Thyroid gland (tissue), 4 donors: ENCODE measurements at regions of chr22 and their contacts with region 1.

Region 1: GRCh38 chr22:19970479-19971275 is 29.1 kb upstream of the TXNRD2 start:
- DNase-seq: peak; percentile 61 to 64
- H3K4me3 ChIP-seq: no peak overlapping the region
- H3K27ac ChIP-seq: peak overlapping the region in 1 of 3 donors; percentile 65
- H3K4me1 ChIP-seq: peaks cover 0 to 20% of the 10 kb centered on the region in 2 donors
- H3K27me3 ChIP-seq: no peaks in the 10 kb centered on the region
- CTCF ChIP-seq: peak; percentile 72 to 97 (median 90)
- POLR2A ChIP-seq: no peak

Region 2: DNA sequence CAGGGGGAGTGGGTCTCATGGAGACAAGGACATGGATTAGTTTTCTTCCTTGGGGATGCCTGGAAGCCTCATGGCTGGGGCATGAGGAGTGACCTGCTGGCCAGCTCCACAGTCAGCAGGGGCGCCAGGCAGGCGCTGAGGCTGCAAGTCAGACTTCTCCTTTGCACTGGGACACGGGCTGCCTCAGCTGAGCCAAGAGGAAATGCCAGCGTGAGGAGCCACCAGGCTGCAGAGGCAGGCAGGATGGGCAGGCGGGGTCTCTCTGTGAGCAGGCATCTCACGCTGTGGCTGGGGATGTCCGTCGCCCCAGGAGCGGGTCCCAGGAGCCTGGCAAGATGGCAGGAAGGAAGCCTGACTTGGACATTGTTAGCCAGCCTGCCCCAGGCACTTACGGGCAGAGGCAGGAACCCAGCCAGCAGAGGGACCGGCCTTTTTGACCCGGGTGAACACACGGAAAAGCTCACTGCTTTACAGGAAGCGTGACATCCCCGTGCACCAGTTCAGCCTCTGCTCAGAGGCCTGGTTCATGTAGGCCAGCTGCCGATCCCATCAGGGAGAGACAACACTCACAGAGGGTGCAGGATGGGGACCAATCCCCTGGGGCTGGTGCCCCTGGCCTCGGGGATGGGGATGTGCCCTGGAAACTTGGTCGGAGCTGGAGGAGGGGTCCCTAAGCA is 126.2 kb before region 1 on chr22:
- intact Hi-C with region 1: no loop called
- DNase-seq: peak; percentile 32 to 35
- H3K4me3 ChIP-seq: no peak overlapping the region
- H3K27ac ChIP-seq: peak overlapping the region in 2 of 3 donors; percentile 30 to 60
- H3K4me1 ChIP-seq: peaks cover 28 to 52% of the 10 kb centered on the region in 2 donors
- H3K27me3 ChIP-seq: no peaks in the 10 kb centered on the region
- CTCF ChIP-seq: no peak
- POLR2A ChIP-seq: no peak

Region 3: GRCh38 chr22:20013382-20013871 is 42.8 kb after region 1 on chr22:
- intact Hi-C with region 1: loop called (anchors 2 kb)
- DNase-seq: peak; percentile 67 to 75
- H3K4me3 ChIP-seq: no peak overlapping the region
- H3K27ac ChIP-seq: peak overlapping the region; percentile 17 to 71 (median 44)
- H3K4me1 ChIP-seq: peaks cover 17 to 37% of the 10 kb centered on the region in 2 donors
- H3K27me3 ChIP-seq: no peaks in the 10 kb centered on the region
- CTCF ChIP-seq: peak; percentile 45 to 95 (median 82)
- POLR2A ChIP-seq: no peak

Region 4: GRCh38 chr22:20102203-20102780 is 131.6 kb after region 1 on chr22:
- intact Hi-C with region 1: no loop called
- DNase-seq: no peak
- H3K4me3 ChIP-seq: no peak overlapping the region
- H3K27ac ChIP-seq: no peak overlapping the region
- H3K4me1 ChIP-seq: peaks cover 11 to 14% of the 10 kb centered on the region in 2 donors
- H3K27me3 ChIP-seq: no peaks in the 10 kb centered on the region
- CTCF ChIP-seq: no peak
- POLR2A ChIP-seq: no peak

Region 5: DNA sequence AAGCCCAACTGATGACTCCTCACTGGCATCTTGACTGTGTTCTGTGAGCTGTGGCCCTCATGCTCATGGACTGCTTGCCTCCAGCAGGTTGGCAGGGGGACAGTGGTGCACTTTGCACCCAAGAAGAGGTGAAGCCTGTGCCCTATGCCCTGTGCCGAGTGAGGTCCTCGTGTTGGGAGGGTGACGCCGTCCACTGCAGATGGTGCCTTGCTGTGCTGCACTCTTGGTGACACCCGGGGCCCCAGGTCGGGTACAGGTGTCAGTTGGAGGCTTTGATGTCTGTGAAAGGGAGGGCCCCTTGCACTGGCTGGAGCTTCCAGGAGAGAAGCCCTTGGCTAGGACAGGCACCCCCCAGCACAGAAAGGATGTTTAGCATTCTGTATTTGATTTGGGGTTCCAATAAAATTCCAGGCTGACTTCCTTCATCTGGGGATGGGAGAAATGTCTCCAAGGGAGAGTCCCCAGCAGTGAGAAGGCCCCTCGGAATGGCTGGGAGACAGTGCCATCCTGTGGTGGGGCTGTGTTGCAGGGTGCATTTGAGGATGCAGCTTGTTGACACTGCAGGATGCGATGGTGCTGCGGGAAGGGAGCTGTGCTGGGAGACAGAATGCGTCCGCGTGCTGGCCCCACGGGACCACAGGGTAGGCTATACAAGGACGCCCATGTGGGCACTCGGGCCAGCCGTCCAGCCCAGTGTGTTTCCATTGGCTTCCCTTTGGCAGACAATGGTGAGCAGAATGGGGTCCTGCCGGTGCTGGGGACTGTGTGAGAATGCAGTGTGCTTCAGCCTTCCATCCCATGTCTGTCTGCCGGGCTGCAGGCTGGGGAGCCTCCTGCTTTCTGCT is 158.4 kb after region 1 on chr22:
- intact Hi-C with region 1: loop called (anchors 10 kb)
- DNase-seq: peak in 1 of 2 donors; percentile 27
- H3K4me3 ChIP-seq: no peak overlapping the region
- H3K27ac ChIP-seq: no peak overlapping the region
- H3K4me1 ChIP-seq: peaks cover 16 to 23% of the 10 kb centered on the region in 2 donors
- H3K27me3 ChIP-seq: no peaks in the 10 kb centered on the region
- CTCF ChIP-seq: peak in 2 of 6 experiments; percentile 20 to 30
- POLR2A ChIP-seq: no peak

Region 6: GRCh38 chr22:20279662-20280134 is 309.0 kb after region 1 on chr22:
- intact Hi-C with region 1: loop called (anchors 10 kb)
- DNase-seq: no peak
- H3K4me3 ChIP-seq: no peak overlapping the region
- H3K27ac ChIP-seq: no peak overlapping the region
- H3K4me1 ChIP-seq: no peaks in the 10 kb centered on the region
- H3K27me3 ChIP-seq: no peaks in the 10 kb centered on the region
- CTCF ChIP-seq: no peak
- POLR2A ChIP-seq: no peak